Calu3 (cell line): ENCODE measurements at regions of chr2 and their contacts with region 1.

Region 1: GRCh38 chr2:160269803-160270570 is 69.9 kb upstream of the ITGB6 start:
- DNase-seq: peak; percentile 88
- H3K4me3 Mint-ChIP-seq: peak overlapping the region; percentile 76
- H3K27ac Mint-ChIP-seq: peak overlapping the region; percentile 99
- H3K4me1 Mint-ChIP-seq: peaks cover 72% of the 10 kb centered on the region
- H3K27me3 Mint-ChIP-seq: no peaks in the 10 kb centered on the region
- CTCF ChIP-seq: peak; percentile 62

Region 2: GRCh38 chr2:160075171-160075570 is 194.8 kb before region 1 on chr2:
- CTCF ChIA-PET with region 1: no interaction called
- intact Hi-C with region 1: no loop called
- DNase-seq: peak; percentile 60
- H3K4me3 Mint-ChIP-seq: no peak overlapping the region
- H3K27ac Mint-ChIP-seq: no peak overlapping the region
- H3K4me1 Mint-ChIP-seq: peaks cover 17% of the 10 kb centered on the region
- H3K27me3 Mint-ChIP-seq: no peaks in the 10 kb centered on the region
- CTCF ChIP-seq: no peak

Region 3: GRCh38 chr2:160109936-160110673 is 159.9 kb before region 1 on chr2:
- CTCF ChIA-PET with region 1: interaction called, 7 read pairs
- intact Hi-C with region 1: loop called (anchors 2 kb)
- DNase-seq: peak; percentile 75
- H3K4me3 Mint-ChIP-seq: no peak overlapping the region
- H3K27ac Mint-ChIP-seq: no peak overlapping the region
- H3K4me1 Mint-ChIP-seq: no peaks in the 10 kb centered on the region
- H3K27me3 Mint-ChIP-seq: no peaks in the 10 kb centered on the region
- CTCF ChIP-seq: peak; percentile 74

Region 4: GRCh38 chr2:160146382-160146781 is 123.6 kb before region 1 on chr2:
- CTCF ChIA-PET with region 1: no interaction called
- intact Hi-C with region 1: no loop called
- DNase-seq: no peak
- H3K4me3 Mint-ChIP-seq: no peak overlapping the region
- H3K27ac Mint-ChIP-seq: no peak overlapping the region
- H3K4me1 Mint-ChIP-seq: peaks cover 26% of the 10 kb centered on the region
- H3K27me3 Mint-ChIP-seq: no peaks in the 10 kb centered on the region
- CTCF ChIP-seq: no peak

Region 5: GRCh38 chr2:160252278-160252887 is 17.6 kb before region 1 on chr2:
- CTCF ChIA-PET with region 1: interaction called, 26 read pairs
- intact Hi-C with region 1: loop called (anchors 2 kb)
- DNase-seq: no peak
- H3K4me3 Mint-ChIP-seq: peak overlapping the region; percentile 65
- H3K27ac Mint-ChIP-seq: peak overlapping the region; percentile 80
- H3K4me1 Mint-ChIP-seq: peaks cover 68% of the 10 kb centered on the region
- H3K27me3 Mint-ChIP-seq: no peaks in the 10 kb centered on the region
- CTCF ChIP-seq: peak; percentile 68